ENCODE measurements at regions of chr3 and their contacts with region 1.

Region 1: DNA sequence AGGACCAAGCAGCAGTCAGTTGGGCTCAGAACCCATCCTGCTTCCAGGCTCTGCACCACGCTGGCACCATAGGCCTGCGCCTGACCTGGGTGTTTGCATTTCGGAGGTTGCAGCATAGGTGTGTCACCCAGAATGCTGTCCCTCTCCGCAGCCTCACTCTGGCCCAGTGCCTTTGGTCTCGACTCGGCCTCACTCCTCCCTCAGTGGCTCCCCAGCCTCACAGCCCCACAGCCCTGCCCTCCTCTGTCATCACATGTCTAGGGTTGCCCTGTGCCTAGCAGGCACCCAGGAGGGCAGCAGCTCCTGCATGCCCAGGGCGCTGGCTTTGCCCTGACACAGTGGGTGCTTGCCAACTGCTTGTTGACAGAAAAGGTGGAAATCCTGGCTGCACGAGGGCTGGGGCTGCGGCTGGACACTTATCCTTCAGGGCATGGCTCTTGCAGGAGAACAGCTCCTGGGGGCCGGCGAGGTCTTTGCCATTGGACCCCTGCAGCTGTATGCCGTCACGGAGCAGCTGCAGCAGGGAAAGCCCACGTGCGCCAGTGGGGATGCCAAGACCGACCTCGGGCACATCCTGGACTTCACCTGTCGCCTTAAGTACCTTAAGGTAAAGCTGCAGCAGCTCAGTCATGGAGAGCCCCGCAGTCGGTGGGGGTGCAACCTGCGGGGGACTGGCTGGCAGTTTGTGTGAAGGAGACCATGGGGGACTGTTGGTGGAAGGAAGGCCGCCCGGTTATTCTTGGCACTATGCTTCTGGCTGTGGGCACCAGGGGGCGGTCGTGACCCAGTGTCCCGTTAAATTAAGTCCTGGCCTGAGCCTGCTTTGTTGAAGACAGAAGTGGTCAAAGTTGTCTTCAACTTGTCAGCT is 16.2 kb downstream of the NISCH start:
- DNase-seq: peak; percentile 74 to 83
- ATAC-seq: peak; percentile 78 to 86 (median 82)
- H3K4me3 ChIP-seq: no peak overlapping the region
- H3K27ac ChIP-seq: peak overlapping the region; percentile 68
- H3K4me1 ChIP-seq: peaks cover 39% of the 10 kb centered on the region
- H3K27me3 ChIP-seq: no peaks in the 10 kb centered on the region
- CTCF ChIP-seq: peak; percentile 76

Region 2: DNA sequence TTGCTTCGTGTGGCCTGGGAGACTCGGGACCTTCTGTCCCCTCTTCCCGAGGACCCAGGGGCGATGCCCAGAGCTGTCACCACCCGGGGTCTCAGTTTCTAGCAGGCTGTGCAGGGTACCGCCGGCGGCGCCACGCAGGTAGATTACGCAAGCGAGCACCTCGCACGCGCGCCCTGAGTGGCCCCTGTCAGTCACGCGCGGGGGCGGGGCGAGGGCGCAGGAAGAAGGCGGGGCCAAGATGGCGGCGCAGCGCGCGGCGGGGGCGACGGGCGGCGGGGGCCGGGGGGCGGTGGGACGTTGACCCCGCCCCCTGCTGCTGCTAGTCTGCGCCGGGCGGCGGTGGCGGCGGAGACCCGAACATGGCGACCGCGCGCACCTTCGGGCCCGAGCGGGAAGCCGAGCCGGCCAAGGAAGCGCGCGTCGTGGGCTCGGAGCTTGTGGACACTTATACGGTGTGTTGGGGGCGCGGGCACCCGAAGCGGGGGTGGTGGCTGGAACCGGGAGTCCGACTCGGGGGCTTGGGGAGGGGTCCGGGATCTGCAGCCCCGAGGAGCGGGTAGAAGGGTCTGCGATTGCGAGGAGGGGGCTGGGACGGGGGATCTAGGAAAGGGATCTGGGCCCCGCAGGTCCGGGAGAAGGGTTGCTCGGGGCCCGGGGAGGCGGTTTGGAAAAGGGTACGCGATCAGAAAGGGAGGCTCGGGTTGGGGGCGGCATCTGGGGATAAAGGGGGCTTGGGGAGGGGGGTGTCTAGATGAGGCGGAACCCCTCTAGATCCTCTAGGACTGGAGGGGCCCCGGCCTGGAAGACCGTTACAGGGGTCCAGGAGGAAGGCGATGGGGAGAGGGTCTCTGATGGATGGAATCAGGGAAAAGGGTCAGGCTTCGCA is 16.1 kb before region 1 on chr3 and contains the start of gene NISCH:
- intact Hi-C with region 1: loop called in 1 of 2 experiments (anchors 1 kb)
- DNase-seq: peak; percentile 94 to 96
- ATAC-seq: peak; percentile 59 to 70 (median 63)
- H3K4me3 ChIP-seq: peak within 1 kb of the TSS; percentile 73
- H3K27ac ChIP-seq: peak within 1 kb of the TSS; percentile 90
- H3K4me1 ChIP-seq: peaks cover 36% of the 10 kb centered on the region
- H3K27me3 ChIP-seq: no peaks in the 10 kb centered on the region
- CTCF ChIP-seq: no peak
- total RNA-seq, gene NISCH: 16.7 to 33.4 (median 28.1) TPM

Region 3: DNA sequence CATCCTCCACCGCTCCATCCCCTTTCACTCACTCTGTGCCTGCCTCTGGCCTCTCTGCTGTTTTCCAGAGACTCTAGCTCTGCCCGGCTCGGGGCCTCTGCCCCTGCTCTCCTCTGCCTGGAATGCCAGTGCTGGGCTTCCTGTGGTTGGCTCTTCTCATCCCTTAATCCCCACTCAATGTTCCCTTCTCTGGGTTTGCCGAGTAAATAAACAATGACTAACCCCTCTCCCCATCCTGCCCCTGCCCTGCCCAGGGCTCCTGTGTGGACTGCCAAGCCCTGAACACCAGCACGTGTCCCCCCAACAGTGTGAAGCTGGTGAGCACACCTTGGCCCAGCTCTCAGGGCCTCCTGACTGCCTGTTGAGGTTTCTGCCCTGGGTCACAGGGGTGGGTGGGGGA is 35.8 kb after region 1 on chr3:
- intact Hi-C with region 1: no loop called
- DNase-seq: no peak
- ATAC-seq: no peak
- H3K4me3 ChIP-seq: no peak overlapping the region
- H3K27ac ChIP-seq: no peak overlapping the region
- H3K4me1 ChIP-seq: no peaks in the 10 kb centered on the region
- H3K27me3 ChIP-seq: no peaks in the 10 kb centered on the region
- CTCF ChIP-seq: no peak

Region 4: GRCh38 chr3:52523386-52524192 is 52.0 kb after region 1 on chr3:
- intact Hi-C with region 1: no loop called
- DNase-seq: peak; percentile 10 to 46
- ATAC-seq: no peak
- H3K4me3 ChIP-seq: no peak overlapping the region
- H3K27ac ChIP-seq: no peak overlapping the region
- H3K4me1 ChIP-seq: no peaks in the 10 kb centered on the region
- H3K27me3 ChIP-seq: no peaks in the 10 kb centered on the region
- CTCF ChIP-seq: no peak

Region 5: GRCh38 chr3:52536369-52537164 is 65.0 kb after region 1 on chr3 and contains the start of gene UQCC5:
- intact Hi-C with region 1: loop called (anchors 5 kb)
- DNase-seq: peak; percentile 98 to 99
- ATAC-seq: peak; percentile 91 to 94 (median 93)
- H3K4me3 ChIP-seq: peak within 1 kb of the TSS; percentile 83
- H3K27ac ChIP-seq: peak within 1 kb of the TSS; percentile 96
- H3K4me1 ChIP-seq: peaks cover 33% of the 10 kb centered on the region
- H3K27me3 ChIP-seq: no peaks in the 10 kb centered on the region
- CTCF ChIP-seq: no peak
- total RNA-seq, gene UQCC5: 29.5 to 32.7 (median 31.0) TPM

Region 6: GRCh38 chr3:52685709-52686691 is 214.4 kb after region 1 on chr3 and contains the starts of genes GNL3 and PBRM1:
- intact Hi-C with region 1: loop called in 1 of 2 experiments (anchors 5 kb)
- DNase-seq: peak; percentile 95 to 97
- ATAC-seq: peak; percentile 93 to 95 (median 94)
- H3K4me3 ChIP-seq: peak within 1 kb of the TSS; percentile 91
- H3K27ac ChIP-seq: peak within 1 kb of the TSS; percentile 93
- H3K4me1 ChIP-seq: peaks cover 39% of the 10 kb centered on the region
- H3K27me3 ChIP-seq: no peaks in the 10 kb centered on the region
- CTCF ChIP-seq: no peak
- total RNA-seq, gene GNL3: 47.3 to 109 (median 67.9) TPM
- total RNA-seq, gene PBRM1: 38.0 to 46.7 (median 39.9) TPM